Right ventricle myocardium superior (tissue), 1 donor: ENCODE measurements at regions of chr12 and their contacts with region 1.

Region 1: GRCh38 chr12:17763366-17763765 is 326.6 kb downstream of the RERGL start:
- DNase-seq: no peak
- ATAC-seq: no peak

Region 2: GRCh38 chr12:17134315-17134714 is 629.1 kb before region 1 on chr12:
- intact Hi-C with region 1: no loop called
- DNase-seq: no peak
- ATAC-seq: no peak

Region 3: DNA sequence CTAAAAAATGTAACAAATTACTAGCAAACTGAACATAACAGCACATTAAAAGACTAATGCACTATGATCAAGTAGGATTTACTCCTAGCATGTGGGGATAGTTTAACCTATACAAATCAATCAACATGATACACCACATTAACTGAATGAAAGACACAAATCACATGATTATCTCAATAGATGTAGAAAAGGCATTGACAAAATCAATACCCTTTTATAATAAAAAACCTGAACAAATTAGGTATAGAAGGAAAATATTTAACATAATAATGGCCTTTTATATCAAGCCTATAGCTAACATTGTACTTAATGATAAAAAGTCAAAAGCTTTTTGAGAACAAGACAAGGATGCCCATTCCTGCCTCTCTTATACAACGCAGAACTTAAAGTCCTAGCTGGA is 213.4 kb before region 1 on chr12:
- intact Hi-C with region 1: no loop called
- DNase-seq: no peak
- ATAC-seq: no peak

Region 4: DNA sequence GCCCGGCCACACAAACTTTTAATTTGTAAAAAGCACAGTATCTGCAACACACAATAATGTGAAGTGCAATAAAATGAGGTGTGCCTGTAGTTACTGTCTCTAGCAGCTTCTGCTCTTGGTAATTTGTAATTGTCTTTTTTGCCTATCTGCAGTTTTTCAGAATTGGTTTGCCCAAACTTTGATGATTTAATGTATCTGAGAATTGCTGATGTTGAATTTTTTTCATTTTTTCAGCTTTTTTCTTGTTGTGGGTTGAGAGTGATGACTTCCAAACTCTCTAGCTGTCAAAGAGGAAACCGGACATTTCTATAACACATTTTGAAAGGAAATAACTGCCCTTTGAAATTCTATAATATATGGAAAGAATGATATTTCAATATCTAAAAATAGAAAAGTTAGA is 89.7 kb after region 1 on chr12:
- intact Hi-C with region 1: loop called (anchors 5 kb)
- DNase-seq: no peak
- ATAC-seq: no peak